Vagina (tissue), 2 donors: ENCODE measurements at regions of chr19 and their contacts with region 1.

Region 1: GRCh38 chr19:10643968-10644259 is 10.2 kb upstream of the ILF3 start:
- DNase-seq: no peak
- H3K4me3 ChIP-seq: no peak overlapping the region
- H3K27ac ChIP-seq: peak overlapping the region; percentile 77
- H3K4me1 ChIP-seq: peaks cover 18% of the 10 kb centered on the region
- H3K27me3 ChIP-seq: no peaks in the 10 kb centered on the region
- CTCF ChIP-seq: no peak
- POLR2A ChIP-seq: no peak

Region 2: GRCh38 chr19:10580979-10581631 is 62.8 kb before region 1 on chr19:
- intact Hi-C with region 1: loop called (anchors 2 kb)
- DNase-seq: no peak
- H3K4me3 ChIP-seq: no peak overlapping the region
- H3K27ac ChIP-seq: no peak overlapping the region
- H3K4me1 ChIP-seq: peaks cover 7% of the 10 kb centered on the region
- H3K27me3 ChIP-seq: no peaks in the 10 kb centered on the region
- CTCF ChIP-seq: peak; percentile 87 to 100 (median 99)
- POLR2A ChIP-seq: no peak

Region 3: GRCh38 chr19:10742476-10742875 is 98.6 kb after region 1 on chr19:
- intact Hi-C with region 1: no loop called
- DNase-seq: no peak
- H3K4me3 ChIP-seq: no peak overlapping the region
- H3K27ac ChIP-seq: no peak overlapping the region
- H3K4me1 ChIP-seq: peaks cover 51% of the 10 kb centered on the region
- H3K27me3 ChIP-seq: no peaks in the 10 kb centered on the region
- CTCF ChIP-seq: no peak
- POLR2A ChIP-seq: no peak